GM13977 (cell line): ENCODE measurements at regions of chr2 and their contacts with region 1.

Region 1: GRCh38 chr2:12032398-12032797 is 286.0 kb downstream of the LPIN1 start:
- DNase-seq: peak; percentile 57
- CTCF ChIP-seq: peak; percentile 46

Region 2: GRCh38 chr2:11863513-11864328 is 168.7 kb before region 1 on chr2:
- in situ Hi-C with region 1: loop called (anchors 25 kb)
- DNase-seq: peak; percentile 70
- CTCF ChIP-seq: peak; percentile 87

Region 3: GRCh38 chr2:12131975-12132374 is 99.6 kb after region 1 on chr2:
- in situ Hi-C with region 1: no loop called
- DNase-seq: no peak
- CTCF ChIP-seq: no peak